MCF 10A (cell line): ENCODE measurements at regions of chr5 and their contacts with region 1.

Region 1: DNA sequence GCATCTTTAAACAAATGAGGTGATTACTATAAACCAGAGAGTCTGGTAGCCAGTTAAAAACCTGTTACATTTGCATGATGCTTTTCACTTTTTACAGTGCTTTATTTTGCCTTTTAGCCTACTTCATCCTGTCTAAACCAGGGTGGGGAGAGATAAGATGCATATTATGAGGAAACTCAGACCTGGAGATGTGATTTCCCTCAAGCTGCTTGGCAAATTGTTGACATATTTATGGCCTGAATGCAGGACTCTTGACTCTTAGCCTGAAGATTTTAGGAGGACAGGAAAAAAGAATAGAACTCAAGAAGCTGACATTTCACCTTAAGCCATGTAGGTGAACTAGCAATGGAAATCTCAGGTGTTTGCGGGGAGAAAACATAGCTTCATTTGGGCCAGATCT is 202.8 kb downstream of the NMUR2 start:
- DNase-seq: no peak
- H3K4me3 Mint-ChIP-seq: no peak overlapping the region
- H3K27ac Mint-ChIP-seq: no peak overlapping the region
- H3K4me1 Mint-ChIP-seq: no peaks in the 10 kb centered on the region
- H3K27me3 Mint-ChIP-seq: no peaks in the 10 kb centered on the region
- CTCF ChIP-seq: no peak

Region 2: DNA sequence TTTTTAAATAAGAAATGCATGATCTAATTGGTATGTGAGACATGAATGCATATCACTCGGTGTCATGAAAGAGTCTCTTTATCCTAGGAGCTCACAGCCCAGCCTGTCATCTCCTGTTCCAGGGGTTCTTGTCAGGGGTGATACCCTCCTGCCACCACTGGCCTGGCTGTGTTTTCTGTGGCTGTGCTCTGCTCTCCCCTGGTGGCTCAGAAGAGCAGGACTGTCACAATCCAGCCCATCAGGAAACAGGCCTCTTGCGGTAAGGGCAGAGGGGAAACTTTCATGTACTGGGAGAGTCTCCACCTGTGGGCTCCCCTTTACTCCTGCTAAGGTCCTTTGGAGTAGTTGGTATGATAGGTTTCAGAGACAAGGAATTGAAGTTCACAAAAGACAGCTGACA is 37.5 kb before region 1 on chr5:
- CTCF ChIA-PET with region 1: no interaction called
- POLR2A ChIA-PET with region 1: no interaction called
- intact Hi-C with region 1: no loop called
- DNase-seq: no peak
- H3K4me3 Mint-ChIP-seq: no peak overlapping the region
- H3K27ac Mint-ChIP-seq: no peak overlapping the region
- H3K4me1 Mint-ChIP-seq: no peaks in the 10 kb centered on the region
- H3K27me3 Mint-ChIP-seq: peaks cover 10% of the 10 kb centered on the region
- CTCF ChIP-seq: no peak

Region 3: DNA sequence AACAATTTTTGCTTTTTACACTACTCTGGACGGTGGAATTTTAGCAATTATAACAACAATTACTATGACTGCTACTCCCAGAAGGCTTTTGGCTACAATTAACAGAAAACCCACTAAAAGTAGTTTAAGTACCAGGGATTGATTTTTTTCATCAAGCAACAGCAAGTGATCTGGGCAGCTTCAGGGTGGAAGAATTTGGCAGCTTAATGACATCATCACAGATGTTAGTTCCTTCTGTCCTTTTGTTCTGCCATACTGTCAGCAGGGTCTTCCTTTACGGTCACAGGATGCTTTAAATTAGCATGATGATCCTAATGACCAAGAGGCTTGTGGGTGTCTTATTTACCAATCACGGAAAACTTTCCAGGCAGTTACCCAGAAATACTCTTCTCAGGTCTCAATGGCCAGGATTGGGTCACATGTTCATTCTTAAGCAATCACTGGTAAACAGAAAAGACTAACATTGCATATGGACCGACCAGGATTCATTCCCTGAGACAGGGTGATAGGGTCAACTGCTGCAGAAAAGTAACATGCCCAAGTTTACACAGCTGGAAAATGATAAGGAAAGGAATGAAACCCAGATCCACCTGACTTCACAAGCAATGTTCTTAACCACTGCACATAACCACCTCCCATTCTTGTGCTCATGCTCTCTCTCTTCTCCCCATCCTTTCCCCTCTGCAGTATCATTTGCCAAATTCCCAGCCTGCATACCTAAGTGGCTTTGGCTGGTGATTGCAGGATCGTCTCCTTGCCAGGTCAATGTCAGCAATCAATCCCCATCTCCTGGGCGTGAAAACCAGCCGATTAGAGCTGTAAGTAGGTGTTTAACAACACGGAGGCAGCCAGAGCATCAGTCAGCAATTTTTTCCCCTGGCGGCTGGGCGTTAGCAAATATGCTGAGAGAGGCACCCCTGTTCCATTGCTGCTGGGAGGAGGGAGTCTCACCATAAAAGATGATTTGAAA is 16.8 kb before region 1 on chr5:
- CTCF ChIA-PET with region 1: no interaction called
- POLR2A ChIA-PET with region 1: no interaction called
- intact Hi-C with region 1: loop called (anchors 1 kb)
- DNase-seq: no peak
- H3K4me3 Mint-ChIP-seq: no peak overlapping the region
- H3K27ac Mint-ChIP-seq: no peak overlapping the region
- H3K4me1 Mint-ChIP-seq: no peaks in the 10 kb centered on the region
- H3K27me3 Mint-ChIP-seq: peaks cover 28% of the 10 kb centered on the region
- CTCF ChIP-seq: no peak